A673 (cell line): ENCODE measurements at regions of chr6 and their contacts with region 1.

Region 1: GRCh38 chr6:52577022-52577777 is at the start of gene TRAM2:
- DNase-seq: peak; percentile 86
- H3K4me3 ChIP-seq: peak within 1 kb of the TSS; percentile 80
- H3K27ac ChIP-seq: peak within 1 kb of the TSS; percentile 89
- H3K4me1 ChIP-seq: peaks cover 3% of the 10 kb centered on the region
- H3K27me3 ChIP-seq: no peaks in the 10 kb centered on the region
- CTCF ChIP-seq: no peak
- total RNA-seq, gene TRAM2: 20.9 and 21.9 TPM in 2 replicates

Region 2: GRCh38 chr6:52549428-52549827 is 27.8 kb before region 1 on chr6:
- CTCF ChIA-PET with region 1: interaction called, 6 read pairs
- POLR2A ChIA-PET with region 1: interaction called, 22 read pairs
- intact Hi-C with region 1: no loop called
- DNase-seq: peak; percentile 94
- H3K4me3 ChIP-seq: no peak overlapping the region
- H3K27ac ChIP-seq: no peak overlapping the region
- H3K4me1 ChIP-seq: peaks cover 59% of the 10 kb centered on the region
- H3K27me3 ChIP-seq: no peaks in the 10 kb centered on the region
- CTCF ChIP-seq: no peak

Region 3: DNA sequence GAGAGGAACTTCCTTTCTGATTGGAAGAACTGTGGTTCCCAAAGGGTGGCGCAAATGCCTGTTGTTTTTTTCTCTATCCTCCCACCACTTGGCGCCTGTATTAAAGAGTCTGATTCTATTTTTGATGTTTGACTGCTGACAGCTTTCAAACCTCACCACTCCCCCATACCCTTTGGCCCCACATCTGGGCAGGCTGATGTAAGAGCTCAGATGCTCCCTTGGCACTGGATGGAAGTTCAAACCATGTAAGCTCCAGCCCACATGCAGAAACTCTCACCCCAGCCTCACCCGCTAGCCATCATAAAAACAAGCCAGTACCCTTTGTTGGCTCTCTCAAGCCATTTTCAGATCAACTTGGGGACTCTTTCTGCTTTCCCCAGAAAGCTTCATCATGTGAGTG is 73.7 kb after region 1 on chr6:
- CTCF ChIA-PET with region 1: no interaction called
- POLR2A ChIA-PET with region 1: no interaction called
- intact Hi-C with region 1: no loop called
- DNase-seq: no peak
- H3K4me3 ChIP-seq: no peak overlapping the region
- H3K27ac ChIP-seq: no peak overlapping the region
- H3K4me1 ChIP-seq: no peaks in the 10 kb centered on the region
- H3K27me3 ChIP-seq: no peaks in the 10 kb centered on the region
- CTCF ChIP-seq: no peak